BJ (cell line): ENCODE measurements at regions of chr6 and their contacts with region 1.

Region 1: DNA sequence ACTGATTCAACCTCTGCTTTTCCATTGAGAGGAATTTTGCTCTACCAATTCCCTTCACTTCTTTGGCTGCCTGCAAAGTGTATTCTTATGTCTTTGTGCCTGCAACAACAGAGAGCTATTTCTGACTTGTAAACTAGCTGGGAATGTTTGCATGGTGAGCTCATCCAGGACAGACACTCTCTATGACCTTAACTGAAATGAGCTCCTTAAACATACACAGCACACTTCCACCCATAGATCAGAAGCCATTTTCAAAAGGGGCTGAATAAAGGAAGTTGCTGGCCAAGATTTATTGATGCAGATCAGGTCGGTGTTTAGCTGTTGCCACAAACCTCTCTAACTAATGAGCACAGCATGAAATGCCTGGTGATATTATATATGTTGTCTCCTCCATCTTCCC is 377.7 kb downstream of the BTBD9 start:
- DNase-seq: peak; percentile 58
- H3K4me3 ChIP-seq: no peak overlapping the region
- H3K27me3 ChIP-seq: no peaks in the 10 kb centered on the region
- CTCF ChIP-seq: no peak

Region 2: DNA sequence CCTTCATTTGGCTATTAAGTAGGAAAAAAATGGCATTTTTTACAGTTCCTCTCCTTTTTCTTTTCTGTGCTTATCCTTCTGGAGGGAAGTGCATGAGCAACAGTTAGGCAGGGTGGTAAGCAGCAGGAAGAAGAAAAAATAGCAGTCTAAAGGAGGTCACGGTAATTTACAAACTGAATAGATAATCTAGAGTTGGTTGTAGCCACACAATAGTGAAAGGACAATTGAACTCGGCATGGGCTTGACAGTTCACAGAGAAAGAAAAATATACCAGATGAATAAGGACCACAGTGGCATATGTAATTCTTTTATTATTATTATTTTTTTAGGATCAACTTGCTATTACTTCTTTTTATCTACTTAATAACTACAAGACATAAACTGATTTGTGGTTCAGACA is 19.1 kb after region 1 on chr6:
- CTCF ChIA-PET with region 1: interaction called, 3 read pairs
- POLR2A ChIA-PET with region 1: interaction called, 11 read pairs
- DNase-seq: no peak
- H3K4me3 ChIP-seq: no peak overlapping the region
- H3K27me3 ChIP-seq: no peaks in the 10 kb centered on the region
- CTCF ChIP-seq: no peak

Region 3: DNA sequence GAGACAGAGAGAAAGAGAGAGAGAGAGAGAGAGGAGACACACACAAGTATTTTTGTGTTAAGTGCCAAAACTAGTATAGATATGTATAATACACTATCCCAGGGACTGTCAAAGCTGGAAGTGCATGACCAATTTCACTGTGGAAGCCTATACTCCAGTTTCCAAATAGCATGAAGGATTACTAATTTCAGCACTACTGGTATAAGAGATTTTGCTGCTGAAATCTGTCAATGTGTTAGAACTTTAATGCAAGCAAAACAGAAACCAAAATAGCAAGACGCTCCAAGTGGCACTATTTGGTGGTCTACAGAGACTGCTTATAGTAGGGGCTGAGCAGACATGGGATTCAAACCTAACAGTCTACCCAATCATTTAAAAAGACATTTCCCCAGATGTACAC is 92.9 kb after region 1 on chr6:
- CTCF ChIA-PET with region 1: no interaction called
- POLR2A ChIA-PET with region 1: no interaction called
- DNase-seq: no peak
- H3K4me3 ChIP-seq: no peak overlapping the region
- H3K27me3 ChIP-seq: no peaks in the 10 kb centered on the region
- CTCF ChIP-seq: no peak